Naive thymus-derived CD4-positive, alpha-beta T cell (primary cell): ENCODE measurements at regions of chr1 and their contacts with region 1.

Region 1: GRCh38 chr1:93909146-93910050 is at the start of gene GCLM:
- DNase-seq: peak; percentile 81 to 97 (median 88)
- ATAC-seq: peak; percentile 98
- H3K4me3 ChIP-seq: peak within 1 kb of the TSS; percentile 61
- H3K4me3 Mint-ChIP-seq: peak within 1 kb of the TSS; percentile 86 to 99 (median 90)
- H3K27ac ChIP-seq: peak within 1 kb of the TSS; percentile 73
- H3K27ac Mint-ChIP-seq: peak within 1 kb of the TSS; percentile 60 to 94 (median 90)
- H3K4me1 ChIP-seq: peaks cover 9 to 13% of the 10 kb centered on the region in 2 donors
- H3K4me1 Mint-ChIP-seq: peaks cover 19 to 38% (median 33%) of the 10 kb centered on the region in 7 donors
- H3K27me3 ChIP-seq: no peaks in the 10 kb centered on the region
- H3K27me3 Mint-ChIP-seq: peaks cover 0 to 30% (median 0%) of the 10 kb centered on the region in 5 donors
- total RNA-seq, gene GCLM: 6.4 to 23.8 (median 11.5) TPM

Region 2: GRCh38 chr1:93437976-93438605 is 471.3 kb before region 1 on chr1:
- CTCF ChIA-PET with region 1: no interaction called
- POLR2A ChIA-PET with region 1: no interaction called
- intact Hi-C with region 1: loop called in 1 of 2 experiments (anchors 1 kb)
- DNase-seq: peak in 5 of 9 donors; percentile 24 to 48 (median 27)
- ATAC-seq: peak; percentile 61
- H3K4me3 ChIP-seq: no peak overlapping the region
- H3K4me3 Mint-ChIP-seq: no peak overlapping the region
- H3K27ac ChIP-seq: no peak overlapping the region
- H3K27ac Mint-ChIP-seq: no peak overlapping the region
- H3K4me1 ChIP-seq: no peaks in the 10 kb centered on the region
- H3K4me1 Mint-ChIP-seq: peaks cover 0 to 2% (median 0%) of the 10 kb centered on the region in 7 donors
- H3K27me3 ChIP-seq: peaks cover 0 to 4% of the 10 kb centered on the region in 2 donors
- H3K27me3 Mint-ChIP-seq: peaks cover 0 to 35% (median 7%) of the 10 kb centered on the region in 5 donors

Region 3: DNA sequence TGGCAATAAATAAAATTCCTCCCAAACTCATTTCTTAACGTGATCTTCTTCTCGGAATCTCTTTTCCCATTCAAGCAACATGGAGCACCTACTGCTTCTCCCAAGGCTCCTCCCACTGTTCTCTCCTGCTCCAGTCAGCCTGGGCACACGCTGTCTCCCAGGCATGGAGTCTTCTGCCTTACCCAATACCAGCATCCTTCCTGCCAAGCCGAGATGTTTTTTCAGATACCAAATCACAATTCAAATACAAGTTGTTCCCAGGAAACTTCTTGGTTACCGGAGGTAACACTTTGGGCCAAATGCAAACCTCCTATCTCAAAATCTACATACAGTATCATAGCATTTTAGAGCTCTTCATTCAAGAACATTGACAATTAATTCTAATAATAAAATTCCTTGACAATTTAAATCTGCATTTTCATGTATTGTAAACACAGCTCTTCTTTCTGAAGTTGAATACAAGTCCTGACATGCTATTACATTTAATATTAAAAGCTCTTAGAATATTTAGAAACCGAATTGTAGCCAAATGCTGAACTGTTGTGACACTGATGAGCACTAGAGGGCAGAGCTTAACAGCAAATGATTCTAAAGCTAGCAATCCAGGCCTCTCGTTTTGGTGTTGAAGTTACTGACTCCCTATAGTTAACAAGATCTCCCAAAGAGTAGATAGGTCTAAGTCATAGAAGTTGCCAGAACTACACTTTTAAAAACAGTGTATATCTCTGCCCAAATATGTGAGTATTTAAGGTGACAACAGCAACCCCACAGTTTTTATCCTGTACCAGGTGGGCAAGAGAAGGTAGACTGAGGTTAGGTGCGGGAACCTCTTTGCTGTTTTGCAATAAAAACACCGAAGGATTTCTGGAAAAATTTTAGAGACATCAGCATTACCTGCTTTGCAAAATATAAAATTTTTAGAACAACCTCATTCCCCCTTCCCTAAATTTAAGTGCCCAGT is 280.0 kb before region 1 on chr1:
- CTCF ChIA-PET with region 1: interaction called, 14 read pairs
- POLR2A ChIA-PET with region 1: interaction called, 4 read pairs
- intact Hi-C with region 1: loop called in 1 of 2 experiments (anchors 1 kb)
- DNase-seq: peak in 8 of 9 donors; percentile 22 to 69 (median 56)
- ATAC-seq: peak; percentile 89
- H3K4me3 ChIP-seq: no peak overlapping the region
- H3K4me3 Mint-ChIP-seq: no peak overlapping the region
- H3K27ac ChIP-seq: no peak overlapping the region
- H3K27ac Mint-ChIP-seq: no peak overlapping the region
- H3K4me1 ChIP-seq: no peaks in the 10 kb centered on the region
- H3K4me1 Mint-ChIP-seq: no peaks in the 10 kb centered on the region
- H3K27me3 ChIP-seq: no peaks in the 10 kb centered on the region
- H3K27me3 Mint-ChIP-seq: peaks cover 0 to 10% (median 0%) of the 10 kb centered on the region in 5 donors

Region 4: DNA sequence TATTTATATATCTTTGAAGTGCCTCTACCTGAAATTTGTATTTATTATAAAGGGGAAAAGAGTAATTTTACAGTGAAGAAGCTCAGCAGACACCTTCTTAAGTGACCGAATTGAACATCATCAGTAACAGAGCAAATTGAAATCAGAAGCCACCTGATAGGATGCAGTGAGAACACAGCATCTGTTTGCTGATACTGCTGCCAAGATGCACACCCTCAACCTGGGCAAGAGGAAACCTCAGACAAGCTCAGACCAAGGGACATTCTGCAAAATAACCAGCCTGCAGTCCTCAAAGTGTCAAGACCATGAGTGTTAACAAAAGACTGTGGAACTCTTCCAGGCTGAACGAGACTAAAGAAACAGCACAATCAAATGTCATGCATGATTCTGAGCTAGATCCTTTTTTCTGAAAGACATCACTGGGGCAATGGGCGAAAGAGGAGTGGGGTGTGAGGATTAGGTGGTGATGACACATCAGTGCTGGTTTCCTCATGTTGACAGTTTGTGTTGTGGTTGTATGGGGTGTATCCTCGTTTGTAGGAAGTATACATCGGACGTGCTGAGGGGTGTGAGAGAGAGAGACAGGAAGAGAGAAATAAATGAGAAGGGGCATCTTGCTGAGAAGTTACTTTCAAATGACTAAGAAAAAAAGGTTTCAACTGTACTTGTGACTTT is 107.9 kb after region 1 on chr1:
- CTCF ChIA-PET with region 1: no interaction called
- POLR2A ChIA-PET with region 1: no interaction called
- intact Hi-C with region 1: loop called in 1 of 2 experiments (anchors 5 kb)
- DNase-seq: peak in 1 of 9 donors; percentile 30
- ATAC-seq: peak; percentile 87
- H3K4me3 ChIP-seq: no peak overlapping the region
- H3K4me3 Mint-ChIP-seq: peak overlapping the region in 1 of 10 donors; percentile 60
- H3K27ac ChIP-seq: no peak overlapping the region
- H3K27ac Mint-ChIP-seq: peak overlapping the region in 3 of 9 donors; percentile 5 to 76 (median 21)
- H3K4me1 ChIP-seq: peaks cover 0 to 25% of the 10 kb centered on the region in 2 donors
- H3K4me1 Mint-ChIP-seq: peaks cover 0 to 33% (median 4%) of the 10 kb centered on the region in 7 donors
- H3K27me3 ChIP-seq: no peaks in the 10 kb centered on the region
- H3K27me3 Mint-ChIP-seq: peaks cover 0 to 11% (median 7%) of the 10 kb centered on the region in 5 donors

Region 5: GRCh38 chr1:95116580-95117206 is 1207.3 kb after region 1 on chr1:
- CTCF ChIA-PET with region 1: no interaction called
- POLR2A ChIA-PET with region 1: no interaction called
- intact Hi-C with region 1: loop called in 1 of 2 experiments (anchors 5 kb)
- DNase-seq: peak; percentile 8 to 53 (median 44)
- ATAC-seq: peak; percentile 77
- H3K4me3 ChIP-seq: peak overlapping the region; percentile 57
- H3K4me3 Mint-ChIP-seq: peak overlapping the region; percentile 73 to 97 (median 91)
- H3K27ac ChIP-seq: no peak overlapping the region
- H3K27ac Mint-ChIP-seq: peak overlapping the region in 3 of 9 donors; percentile 5 to 86 (median 33)
- H3K4me1 ChIP-seq: peaks cover 4% of the 10 kb centered on the region in 2 donors
- H3K4me1 Mint-ChIP-seq: peaks cover 0 to 14% (median 9%) of the 10 kb centered on the region in 7 donors
- H3K27me3 ChIP-seq: peaks cover 0 to 3% of the 10 kb centered on the region in 2 donors
- H3K27me3 Mint-ChIP-seq: peaks cover 21 to 67% (median 52%) of the 10 kb centered on the region in 5 donors